ENCODE measurements at regions of chr4 and their contacts with region 1.

Region 1: GRCh38 chr4:10232114-10232513 is 115.5 kb upstream of the WDR1 start:
- DNase-seq: no peak
- ATAC-seq: no peak
- H3K4me3 ChIP-seq: no peak overlapping the region
- H3K27ac ChIP-seq: no peak overlapping the region
- H3K4me1 ChIP-seq: no peaks in the 10 kb centered on the region
- H3K27me3 ChIP-seq: no peaks in the 10 kb centered on the region

Region 2: GRCh38 chr4:10033191-10033881 is 198.8 kb before region 1 on chr4:
- intact Hi-C with region 1: no loop called
- DNase-seq: no peak
- ATAC-seq: peak; percentile 86
- H3K4me3 ChIP-seq: no peak overlapping the region
- H3K27ac ChIP-seq: no peak overlapping the region
- H3K4me1 ChIP-seq: no peaks in the 10 kb centered on the region
- H3K27me3 ChIP-seq: no peaks in the 10 kb centered on the region

Region 3: GRCh38 chr4:10173037-10173753 is 58.9 kb before region 1 on chr4:
- intact Hi-C with region 1: loop called in 1 of 2 experiments (anchors 5 kb)
- DNase-seq: no peak
- ATAC-seq: no peak
- H3K4me3 ChIP-seq: no peak overlapping the region
- H3K27ac ChIP-seq: no peak overlapping the region
- H3K4me1 ChIP-seq: peaks cover 3 to 12% of the 10 kb centered on the region in 2 donors
- H3K27me3 ChIP-seq: no peaks in the 10 kb centered on the region

Region 4: GRCh38 chr4:10201381-10202223 is 30.5 kb before region 1 on chr4:
- intact Hi-C with region 1: no loop called
- DNase-seq: no peak
- ATAC-seq: no peak
- H3K4me3 ChIP-seq: no peak overlapping the region
- H3K27ac ChIP-seq: no peak overlapping the region
- H3K4me1 ChIP-seq: no peaks in the 10 kb centered on the region
- H3K27me3 ChIP-seq: no peaks in the 10 kb centered on the region

Region 5: GRCh38 chr4:10371869-10372471 is 139.9 kb after region 1 on chr4:
- intact Hi-C with region 1: no loop called
- DNase-seq: no peak
- ATAC-seq: no peak
- H3K4me3 ChIP-seq: no peak overlapping the region
- H3K27ac ChIP-seq: no peak overlapping the region
- H3K4me1 ChIP-seq: no peaks in the 10 kb centered on the region
- H3K27me3 ChIP-seq: no peaks in the 10 kb centered on the region